A549 (cell line): ENCODE measurements at regions of chr17 and their contacts with region 1.

Region 1: GRCh38 chr17:81959362-81960129 is 1.4 kb downstream of the NOTUM start:
- DNase-seq: peak; percentile 55 to 65
- ATAC-seq: peak; percentile 54 to 77
- H3K4me3 ChIP-seq: peak overlapping the region; percentile 52
- H3K27ac ChIP-seq: peak overlapping the region; percentile 60 to 89
- H3K4me1 ChIP-seq: peaks cover 19% of the 10 kb centered on the region; the same call in 1 of the 3 replicates
- CTCF ChIP-seq: peak; percentile 100
- EP300 ChIP-seq: no peak
- POLR2A ChIP-seq: no peak
- RAD21 ChIP-seq: peak; percentile 85 to 100

Region 2: GRCh38 chr17:81576621-81577277 is 382.8 kb before region 1 on chr17:
- CTCF ChIA-PET with region 1: no interaction called
- POLR2A ChIA-PET with region 1: no interaction called
- DNase-seq: peak; percentile 89 to 99
- ATAC-seq: peak; percentile 86 to 91
- H3K4me3 ChIP-seq: peak overlapping the region; percentile 21; the same call in 2 of the 3 replicates
- H3K27ac ChIP-seq: peak overlapping the region; percentile 93 to 95
- H3K4me1 ChIP-seq: peaks cover 76% of the 10 kb centered on the region
- CTCF ChIP-seq: 0 out of 3 replicates have a peak, but pooled peaks have one; percentile 13
- EP300 ChIP-seq: peak in 1 of 2 experiments; percentile 67; a peak in 2 of 5 replicates
- POLR2A ChIP-seq: no peak
- RAD21 ChIP-seq: peak; percentile 43 to 57; a peak in 4 of 5 replicates

Region 3: DNA sequence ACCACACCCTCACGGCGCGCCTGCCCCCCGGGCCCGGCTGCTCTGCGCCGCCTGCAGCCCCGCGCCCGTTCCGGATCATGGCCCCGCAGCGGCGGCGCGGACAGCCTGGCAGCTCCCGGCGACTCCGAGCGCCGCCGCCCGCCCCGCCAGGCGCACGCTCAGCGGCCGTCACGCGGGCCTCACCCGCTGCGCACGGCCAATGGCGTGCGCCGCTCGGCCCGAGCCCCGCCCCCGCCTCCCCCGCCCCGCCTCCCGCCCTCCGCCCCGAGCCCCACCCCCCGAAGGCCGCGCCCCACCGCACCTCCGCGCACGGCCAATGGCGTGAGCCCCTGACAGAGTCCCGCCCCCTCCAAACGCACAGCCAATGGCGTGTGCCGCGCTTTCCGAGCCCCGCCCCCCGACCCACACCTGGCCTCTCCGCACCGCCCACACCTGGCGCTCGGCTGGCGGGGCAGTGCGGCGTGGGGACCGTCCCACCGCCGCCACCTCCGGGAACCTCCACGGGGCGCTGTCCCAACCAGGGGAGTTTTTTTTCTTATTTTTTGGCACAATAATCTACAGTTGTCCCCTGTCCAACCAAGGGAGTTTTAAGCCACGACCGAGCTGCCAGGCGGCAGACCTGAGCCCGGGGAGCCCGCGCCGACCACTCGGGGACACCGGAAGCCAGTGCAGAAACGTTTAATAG is 48.1 kb before region 1 on chr17 and contains the start of gene PCYT2:
- CTCF ChIA-PET with region 1: interaction called, 16 read pairs
- POLR2A ChIA-PET with region 1: no interaction called
- DNase-seq: peak; percentile 93 to 99
- ATAC-seq: peak; percentile 72 to 83
- H3K4me3 ChIP-seq: peak within 1 kb of the TSS; percentile 71
- H3K27ac ChIP-seq: peak within 1 kb of the TSS; percentile 62 to 88
- H3K4me1 ChIP-seq: peaks cover 14% of the 10 kb centered on the region
- CTCF ChIP-seq: no peak
- EP300 ChIP-seq: no peak
- POLR2A ChIP-seq: peak; percentile 31; the same call in 1 of the 2 replicates
- RAD21 ChIP-seq: no peak
- polyA plus RNA-seq, gene PCYT2: 7.1 and 7.7 TPM in 2 replicates

Region 4: DNA sequence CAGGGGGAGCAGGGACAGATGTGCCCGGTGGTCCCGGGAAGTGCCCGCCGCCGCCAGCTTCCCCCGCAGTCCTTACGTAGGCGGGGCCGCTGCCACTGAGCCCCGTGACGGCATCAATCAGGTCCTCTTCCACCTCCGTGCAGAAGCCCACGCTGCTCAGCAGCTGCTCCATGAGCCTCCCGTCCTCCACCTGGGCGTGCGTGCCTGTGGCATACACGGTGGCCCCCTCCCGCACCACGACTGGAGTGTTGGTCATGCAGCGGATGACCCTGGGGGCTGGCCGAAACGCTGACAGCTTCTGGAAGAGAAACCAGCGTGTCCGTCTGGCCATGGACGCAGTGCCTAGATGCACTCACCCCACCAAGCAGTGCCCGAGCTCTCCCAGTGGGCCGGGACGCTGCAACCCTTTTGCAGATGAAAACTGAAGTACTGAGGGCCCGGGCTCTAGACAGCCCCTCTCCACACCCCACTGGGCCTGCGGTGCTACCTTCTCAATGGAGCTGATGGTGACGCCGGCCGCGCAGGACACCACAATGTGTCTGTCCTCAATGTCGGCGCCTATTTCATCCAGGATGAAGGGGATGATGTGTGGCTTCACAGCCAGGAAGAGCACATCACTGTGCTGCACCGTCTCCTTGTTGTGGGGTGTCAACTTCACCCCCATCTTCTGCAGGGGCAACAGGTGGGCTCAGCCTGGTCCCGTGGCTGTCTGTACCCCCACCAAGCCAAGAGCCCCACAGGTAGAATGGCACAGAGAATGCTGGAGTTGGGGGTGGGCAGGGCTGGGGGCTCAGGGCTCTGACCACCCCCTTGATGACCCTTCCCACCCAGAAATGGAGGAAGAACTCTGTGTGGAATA is 24.5 kb before region 1 on chr17:
- CTCF ChIA-PET with region 1: interaction called, 99 read pairs
- POLR2A ChIA-PET with region 1: no interaction called
- DNase-seq: no peak
- ATAC-seq: no peak
- H3K4me3 ChIP-seq: no peak overlapping the region
- H3K27ac ChIP-seq: no peak overlapping the region
- H3K4me1 ChIP-seq: peaks cover 17% of the 10 kb centered on the region; the same call in 2 of the 3 replicates
- CTCF ChIP-seq: no peak
- EP300 ChIP-seq: no peak
- POLR2A ChIP-seq: no peak; the same call in 1 of the 2 replicates
- RAD21 ChIP-seq: no peak

Region 5: DNA sequence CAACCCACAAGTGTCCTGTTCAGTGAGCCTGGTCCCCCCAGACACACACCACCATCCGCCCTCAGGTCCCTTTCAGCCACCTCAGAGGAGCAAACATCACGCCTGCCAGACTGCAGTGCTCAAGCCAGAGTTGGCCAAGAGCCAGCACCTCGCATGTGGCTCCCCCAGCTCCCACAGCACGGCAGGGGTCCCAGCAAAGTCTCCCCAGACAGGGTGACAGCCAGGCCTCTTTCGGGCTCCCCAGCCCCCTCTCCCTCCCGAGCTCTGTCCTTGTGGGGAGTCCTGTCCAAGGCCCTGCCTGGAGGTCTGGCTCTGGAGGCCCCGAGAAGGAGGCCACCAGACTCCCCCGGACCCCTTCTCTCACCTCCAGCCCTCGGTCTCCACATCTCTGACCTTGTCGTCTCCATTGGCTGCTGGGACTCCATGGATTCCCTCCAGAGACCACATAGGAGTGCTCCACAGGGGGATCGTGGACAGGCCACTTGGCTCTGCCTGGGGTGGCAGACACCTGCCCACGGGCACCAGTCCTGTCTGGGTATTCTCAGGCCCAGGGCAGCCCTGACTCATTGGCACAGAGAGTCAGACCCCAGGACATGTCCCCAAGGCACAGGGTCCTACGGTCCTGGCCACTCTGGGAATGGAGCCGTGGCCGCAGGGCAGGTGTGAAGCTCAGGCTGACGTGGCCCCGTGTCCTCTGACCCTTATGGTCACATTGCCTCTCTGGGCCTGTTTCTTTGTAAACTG is 10.7 kb before region 1 on chr17:
- CTCF ChIA-PET with region 1: interaction called, 116 read pairs
- POLR2A ChIA-PET with region 1: no interaction called
- DNase-seq: no peak
- ATAC-seq: peak in 1 of 2 experiments; percentile 41; a peak in 1 of 6 replicates
- H3K4me3 ChIP-seq: no peak overlapping the region
- H3K27ac ChIP-seq: no peak overlapping the region
- H3K4me1 ChIP-seq: no peaks in the 10 kb centered on the region
- CTCF ChIP-seq: no peak
- EP300 ChIP-seq: no peak
- POLR2A ChIP-seq: no peak
- RAD21 ChIP-seq: no peak

Region 6: DNA sequence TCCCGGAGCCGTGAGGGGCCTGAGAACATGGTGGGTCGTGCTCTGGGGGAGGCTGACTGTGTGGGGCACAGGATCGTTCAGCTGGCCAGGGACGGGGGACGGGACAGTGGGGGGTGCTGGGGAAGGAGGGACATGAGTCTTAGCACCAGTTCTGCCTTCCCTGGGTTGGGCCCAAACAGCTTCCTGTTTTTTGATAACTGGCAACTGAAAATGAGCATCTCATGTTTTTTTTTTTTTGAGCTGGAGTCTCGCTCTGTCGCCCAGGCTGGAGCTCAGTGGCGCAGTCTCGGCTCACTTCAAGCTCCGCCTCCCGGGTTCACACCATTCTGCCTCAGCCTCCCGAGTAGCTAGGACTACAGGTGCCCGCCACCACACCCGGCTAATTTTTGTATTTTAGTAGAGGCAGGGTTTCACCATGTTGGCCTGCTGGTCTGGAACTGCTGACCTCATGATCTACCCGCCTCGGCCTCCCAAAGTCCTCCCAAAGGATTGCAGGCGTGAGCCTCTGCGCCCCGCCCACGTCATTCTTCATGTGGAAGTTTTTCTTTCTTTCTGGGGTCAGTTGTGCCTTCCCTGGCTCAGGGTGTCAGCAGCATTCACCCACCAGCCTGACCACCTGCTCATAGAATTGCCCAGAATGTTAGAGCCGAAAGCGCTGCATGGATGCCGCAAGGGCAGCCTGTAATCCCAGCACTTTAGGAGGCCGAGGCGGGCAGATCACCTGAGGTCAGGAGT is 24.3 kb after region 1 on chr17:
- CTCF ChIA-PET with region 1: interaction called, 46 read pairs
- POLR2A ChIA-PET with region 1: no interaction called
- DNase-seq: no peak
- ATAC-seq: no peak
- H3K4me3 ChIP-seq: no peak overlapping the region
- H3K27ac ChIP-seq: no peak overlapping the region
- H3K4me1 ChIP-seq: peaks cover 2% of the 10 kb centered on the region; the same call in 1 of the 3 replicates
- CTCF ChIP-seq: no peak
- EP300 ChIP-seq: no peak
- POLR2A ChIP-seq: no peak
- RAD21 ChIP-seq: no peak

Region 7: GRCh38 chr17:82022981-82023374 is 63.4 kb after region 1 on chr17 and contains the start of gene LRRC45:
- CTCF ChIA-PET with region 1: interaction called, 794 read pairs
- POLR2A ChIA-PET with region 1: interaction called, 8 read pairs
- DNase-seq: peak; percentile 99 to 100
- ATAC-seq: peak; percentile 67 to 89
- H3K4me3 ChIP-seq: peak within 1 kb of the TSS; percentile 77
- H3K27ac ChIP-seq: peak within 1 kb of the TSS; percentile 80 to 92
- H3K4me1 ChIP-seq: peaks cover 39% of the 10 kb centered on the region
- CTCF ChIP-seq: no peak
- EP300 ChIP-seq: no peak
- POLR2A ChIP-seq: no peak
- RAD21 ChIP-seq: no peak
- polyA plus RNA-seq, gene LRRC45: 6.0 and 6.4 TPM in 2 replicates

Region 8: DNA sequence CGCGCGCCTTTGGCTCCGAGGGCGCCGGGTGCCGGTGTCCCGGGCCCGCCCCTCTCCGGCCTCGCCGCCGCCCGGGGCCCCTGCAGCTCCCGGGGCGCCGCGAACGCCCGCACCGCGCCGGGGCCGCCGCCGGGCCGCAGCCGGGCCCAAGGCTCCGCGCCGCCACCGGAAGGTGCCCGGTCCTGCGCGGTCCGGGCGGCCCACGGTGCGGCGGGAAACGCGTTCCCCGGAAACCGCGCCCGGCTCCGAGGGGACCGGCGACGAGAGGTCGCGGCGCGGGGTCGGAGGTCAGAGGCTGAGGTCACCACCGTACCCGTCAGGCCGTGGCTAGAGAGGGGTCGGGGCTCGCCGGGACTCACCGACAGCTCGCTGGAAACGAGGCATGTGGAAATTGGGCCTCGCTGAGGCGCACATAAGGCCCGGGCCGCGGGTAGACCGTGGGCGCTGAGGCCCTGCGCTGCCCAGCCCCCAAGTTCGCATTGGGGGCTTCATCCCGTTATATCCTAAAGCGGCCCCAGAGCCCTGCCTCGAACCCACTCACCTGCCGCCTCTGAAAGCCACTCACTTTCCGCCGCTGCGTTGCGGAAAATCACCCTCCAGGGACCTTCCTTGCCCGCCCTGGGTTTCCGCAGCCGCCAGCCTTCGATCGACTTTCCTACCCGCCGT is 106.2 kb after region 1 on chr17 and contains the start of gene DUS1L:
- CTCF ChIA-PET with region 1: interaction called, 19 read pairs
- POLR2A ChIA-PET with region 1: no interaction called
- DNase-seq: peak; percentile 68 to 72
- ATAC-seq: peak; percentile 52 to 65; a peak in 5 of 6 replicates
- H3K4me3 ChIP-seq: peak within 1 kb of the TSS; percentile 94
- H3K27ac ChIP-seq: peak within 1 kb of the TSS; percentile 94 to 96
- H3K4me1 ChIP-seq: peaks cover 19% of the 10 kb centered on the region
- CTCF ChIP-seq: no peak
- EP300 ChIP-seq: no peak
- POLR2A ChIP-seq: peak; percentile 59
- RAD21 ChIP-seq: no peak
- polyA plus RNA-seq, gene DUS1L: 48.1 and 59.5 TPM in 2 replicates

Region 9: GRCh38 chr17:82536512-82537201 is 577.1 kb after region 1 on chr17:
- CTCF ChIA-PET with region 1: no interaction called
- POLR2A ChIA-PET with region 1: no interaction called
- DNase-seq: no peak
- ATAC-seq: peak; percentile 21 to 48; a peak in 3 of 6 replicates
- H3K4me3 ChIP-seq: no peak overlapping the region
- H3K27ac ChIP-seq: peak overlapping the region; percentile 0 to 61; a peak in 4 of 6 replicates
- H3K4me1 ChIP-seq: peaks cover 41% of the 10 kb centered on the region
- CTCF ChIP-seq: no peak
- EP300 ChIP-seq: no peak
- POLR2A ChIP-seq: no peak
- RAD21 ChIP-seq: no peak